Ovary (tissue), 10 donors: ENCODE measurements at regions of chr3 and their contacts with region 1.

Region 1: GRCh38 chr3:77915336-77915735 is 875.4 kb downstream of the ROBO2 start:
- DNase-seq: no peak
- H3K4me3 ChIP-seq: no peak overlapping the region
- H3K27ac ChIP-seq: no peak overlapping the region
- H3K4me1 ChIP-seq: no peaks in the 10 kb centered on the region
- H3K27me3 ChIP-seq: no peaks in the 10 kb centered on the region
- CTCF ChIP-seq: no peak
- EP300 ChIP-seq: no peak
- POLR2A ChIP-seq: no peak

Region 2: GRCh38 chr3:77945320-77945719 is 30.0 kb after region 1 on chr3:
- intact Hi-C with region 1: no loop called
- DNase-seq: no peak
- H3K4me3 ChIP-seq: no peak overlapping the region
- H3K27ac ChIP-seq: no peak overlapping the region
- H3K4me1 ChIP-seq: no peaks in the 10 kb centered on the region
- H3K27me3 ChIP-seq: no peaks in the 10 kb centered on the region
- CTCF ChIP-seq: no peak
- EP300 ChIP-seq: no peak
- POLR2A ChIP-seq: no peak

Region 3: GRCh38 chr3:77967621-77968020 is 52.3 kb after region 1 on chr3:
- intact Hi-C with region 1: no loop called
- DNase-seq: no peak
- H3K4me3 ChIP-seq: no peak overlapping the region
- H3K27ac ChIP-seq: no peak overlapping the region
- H3K4me1 ChIP-seq: no peaks in the 10 kb centered on the region
- H3K27me3 ChIP-seq: no peaks in the 10 kb centered on the region
- CTCF ChIP-seq: no peak
- EP300 ChIP-seq: no peak
- POLR2A ChIP-seq: no peak

Region 4: DNA sequence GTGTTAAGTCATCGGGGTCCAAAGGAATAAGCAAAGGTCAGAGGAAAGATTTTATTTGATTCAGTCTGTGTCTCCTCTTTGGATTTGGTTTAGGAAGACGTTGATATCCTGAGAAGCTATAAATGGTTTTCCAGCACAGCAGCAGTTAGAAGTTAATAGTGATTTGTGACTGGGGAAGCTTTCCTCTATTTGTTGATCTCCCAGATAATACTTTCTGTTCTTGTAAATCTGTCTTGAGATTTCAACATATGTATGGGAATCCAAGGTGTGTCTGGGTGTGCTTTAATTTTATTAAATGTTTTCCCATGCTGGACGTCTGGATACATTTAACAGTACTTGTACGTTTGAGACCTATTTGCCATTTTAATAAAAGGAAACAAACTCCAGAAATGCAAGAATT is 1443.0 kb after region 1 on chr3:
- intact Hi-C with region 1: loop called in 1 of 4 experiments (anchors 5 kb)
- DNase-seq: no peak
- H3K4me3 ChIP-seq: no peak overlapping the region
- H3K27ac ChIP-seq: no peak overlapping the region
- H3K4me1 ChIP-seq: no peaks in the 10 kb centered on the region
- H3K27me3 ChIP-seq: no peaks in the 10 kb centered on the region
- CTCF ChIP-seq: no peak
- EP300 ChIP-seq: no peak
- POLR2A ChIP-seq: no peak